Gastrocnemius medialis (tissue), 4 donors: ENCODE measurements at regions of chr5 and their contacts with region 1.

Region 1: GRCh38 chr5:137754126-137754960 is at the start of gene HNRNPA0:
- DNase-seq: peak; percentile 96 to 97
- ATAC-seq: peak; percentile 92 to 95
- H3K4me3 ChIP-seq: peak within 1 kb of the TSS; percentile 80 to 98 (median 96)
- H3K27ac ChIP-seq: peak within 1 kb of the TSS; percentile 98 to 100 (median 100)
- H3K4me1 ChIP-seq: peaks cover 28 to 31% of the 10 kb centered on the region in 2 donors
- H3K27me3 ChIP-seq: no peaks in the 10 kb centered on the region
- CTCF ChIP-seq: peak in 2 of 5 experiments; percentile 19 to 26
- POLR2A ChIP-seq: peak; percentile 96 to 99
- total RNA-seq, gene HNRNPA0: 4.2 to 6.0 (median 5.2) TPM

Region 2: DNA sequence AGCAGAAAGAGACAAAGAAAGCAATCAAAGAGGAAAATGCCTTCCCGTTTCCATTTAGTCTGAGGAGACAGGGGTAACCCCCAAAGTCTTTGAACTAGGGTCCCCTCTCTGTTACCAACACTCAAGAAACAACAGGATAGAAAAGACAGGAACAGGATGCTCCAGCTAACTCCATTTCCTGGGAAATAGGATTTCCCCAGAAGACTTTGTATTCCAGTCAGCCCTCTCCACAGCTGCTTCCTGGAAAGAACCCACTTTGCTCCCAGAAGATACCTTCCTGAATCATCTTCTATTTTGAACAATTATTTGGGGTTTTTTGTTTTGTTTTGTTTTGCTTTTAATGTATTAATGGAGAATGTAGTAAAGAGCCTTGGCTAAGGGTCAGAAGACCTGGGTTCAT is 74.4 kb before region 1 on chr5:
- in situ Hi-C with region 1: no loop called
- intact Hi-C with region 1: no loop called
- DNase-seq: no peak
- ATAC-seq: no peak
- H3K4me3 ChIP-seq: no peak overlapping the region
- H3K27ac ChIP-seq: no peak overlapping the region
- H3K4me1 ChIP-seq: no peaks in the 10 kb centered on the region
- H3K27me3 ChIP-seq: no peaks in the 10 kb centered on the region
- CTCF ChIP-seq: no peak
- POLR2A ChIP-seq: no peak

Region 3: DNA sequence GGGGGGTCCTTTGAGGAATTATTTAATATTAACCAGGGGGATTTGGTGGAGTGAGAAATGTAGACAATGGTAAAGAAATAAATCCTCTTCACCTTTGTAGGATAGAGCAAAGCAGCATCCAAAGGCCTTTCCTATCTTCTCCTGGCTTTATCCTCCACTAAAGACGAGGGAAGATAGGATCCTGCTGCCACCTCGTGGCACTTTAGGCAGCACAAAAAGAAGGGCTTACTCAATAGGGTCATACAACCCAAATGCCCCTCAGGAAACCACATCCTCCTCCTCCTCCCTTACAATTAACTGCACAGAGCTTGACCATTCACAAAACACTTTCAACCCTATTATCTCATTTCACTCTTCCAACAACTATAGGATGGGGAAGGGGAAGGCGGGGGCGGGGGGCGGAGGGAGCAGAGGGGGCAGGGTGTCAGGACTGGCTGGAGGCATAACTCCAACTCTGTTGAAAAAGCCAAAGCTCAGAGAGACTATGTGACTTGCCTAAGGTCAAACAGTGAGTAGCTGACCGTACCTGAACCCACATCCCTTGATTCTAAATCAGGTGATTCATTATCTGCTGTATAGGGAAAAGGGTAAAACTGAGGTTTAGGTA is 67.9 kb after region 1 on chr5:
- in situ Hi-C with region 1: no loop called
- intact Hi-C with region 1: loop called (anchors 2 kb)
- DNase-seq: peak; percentile 18 to 55
- ATAC-seq: peak; percentile 79 to 90
- H3K4me3 ChIP-seq: no peak overlapping the region
- H3K27ac ChIP-seq: peak overlapping the region; percentile 17 to 54 (median 32)
- H3K4me1 ChIP-seq: peaks cover 8 to 9% of the 10 kb centered on the region in 2 donors
- H3K27me3 ChIP-seq: no peaks in the 10 kb centered on the region
- CTCF ChIP-seq: peak; percentile 32 to 66 (median 53)
- POLR2A ChIP-seq: no peak

Region 4: GRCh38 chr5:138178516-138179276 is 424.4 kb after region 1 on chr5 and contains the starts of genes BRD8 and KIF20A:
- in situ Hi-C with region 1: no loop called
- intact Hi-C with region 1: loop called (anchors 5 kb)
- DNase-seq: peak; percentile 95 to 98
- ATAC-seq: peak; percentile 99
- H3K4me3 ChIP-seq: peak within 1 kb of the TSS; percentile 80 to 95 (median 92)
- H3K27ac ChIP-seq: peak within 1 kb of the TSS; percentile 88 to 96 (median 95)
- H3K4me1 ChIP-seq: peaks cover 17 to 19% of the 10 kb centered on the region in 2 donors
- H3K27me3 ChIP-seq: no peaks in the 10 kb centered on the region
- CTCF ChIP-seq: no peak
- POLR2A ChIP-seq: peak in 1 of 2 donors; percentile 48
- total RNA-seq, gene BRD8: 20.2 to 28.0 (median 24.1) TPM
- total RNA-seq, gene KIF20A: 0.75 to 0.89 TPM in 2 of 4 donors, not detected in the others